Naive thymus-derived CD4-positive, alpha-beta T cell (primary cell): ENCODE measurements at regions of chr10 and their contacts with region 1.

Region 1: GRCh38 chr10:77710759-77711682 is 73.4 kb upstream of the KCNMA1 start:
- DNase-seq: peak; percentile 26 to 82 (median 55)
- ATAC-seq: peak; percentile 95
- H3K4me3 ChIP-seq: peak overlapping the region; percentile 30
- H3K4me3 Mint-ChIP-seq: peak overlapping the region; percentile 24 to 70 (median 54)
- H3K27ac ChIP-seq: no peak overlapping the region
- H3K27ac Mint-ChIP-seq: no peak overlapping the region
- H3K4me1 ChIP-seq: no peaks in the 10 kb centered on the region
- H3K4me1 Mint-ChIP-seq: peaks cover 3 to 7% (median 5%) of the 10 kb centered on the region in 7 donors
- H3K27me3 ChIP-seq: peaks cover 0 to 2% of the 10 kb centered on the region in 2 donors
- H3K27me3 Mint-ChIP-seq: peaks cover 6 to 52% (median 41%) of the 10 kb centered on the region in 5 donors

Region 2: GRCh38 chr10:77165445-77166208 is 545.4 kb before region 1 on chr10:
- CTCF ChIA-PET with region 1: no interaction called
- POLR2A ChIA-PET with region 1: no interaction called
- intact Hi-C with region 1: loop called (anchors 2 kb)
- DNase-seq: peak in 6 of 9 donors; percentile 22 to 34 (median 28)
- ATAC-seq: peak; percentile 60
- H3K4me3 ChIP-seq: no peak overlapping the region
- H3K4me3 Mint-ChIP-seq: peak overlapping the region in 7 of 10 donors; percentile 7 to 73 (median 62)
- H3K27ac ChIP-seq: no peak overlapping the region
- H3K27ac Mint-ChIP-seq: no peak overlapping the region
- H3K4me1 ChIP-seq: no peaks in the 10 kb centered on the region
- H3K4me1 Mint-ChIP-seq: peaks cover 0 to 5% (median 3%) of the 10 kb centered on the region in 7 donors
- H3K27me3 ChIP-seq: no peaks in the 10 kb centered on the region
- H3K27me3 Mint-ChIP-seq: peaks cover 24 to 44% (median 39%) of the 10 kb centered on the region in 5 donors

Region 3: GRCh38 chr10:77173615-77174461 is 537.2 kb before region 1 on chr10:
- CTCF ChIA-PET with region 1: interaction called, 3 read pairs
- POLR2A ChIA-PET with region 1: no interaction called
- intact Hi-C with region 1: loop called in 1 of 2 experiments (anchors 1 kb)
- DNase-seq: peak in 8 of 9 donors; percentile 19 to 50 (median 38)
- ATAC-seq: peak; percentile 68
- H3K4me3 ChIP-seq: no peak overlapping the region
- H3K4me3 Mint-ChIP-seq: no peak overlapping the region
- H3K27ac ChIP-seq: no peak overlapping the region
- H3K27ac Mint-ChIP-seq: no peak overlapping the region
- H3K4me1 ChIP-seq: no peaks in the 10 kb centered on the region
- H3K4me1 Mint-ChIP-seq: no peaks in the 10 kb centered on the region
- H3K27me3 ChIP-seq: no peaks in the 10 kb centered on the region
- H3K27me3 Mint-ChIP-seq: peaks cover 3 to 32% (median 12%) of the 10 kb centered on the region in 5 donors

Region 4: DNA sequence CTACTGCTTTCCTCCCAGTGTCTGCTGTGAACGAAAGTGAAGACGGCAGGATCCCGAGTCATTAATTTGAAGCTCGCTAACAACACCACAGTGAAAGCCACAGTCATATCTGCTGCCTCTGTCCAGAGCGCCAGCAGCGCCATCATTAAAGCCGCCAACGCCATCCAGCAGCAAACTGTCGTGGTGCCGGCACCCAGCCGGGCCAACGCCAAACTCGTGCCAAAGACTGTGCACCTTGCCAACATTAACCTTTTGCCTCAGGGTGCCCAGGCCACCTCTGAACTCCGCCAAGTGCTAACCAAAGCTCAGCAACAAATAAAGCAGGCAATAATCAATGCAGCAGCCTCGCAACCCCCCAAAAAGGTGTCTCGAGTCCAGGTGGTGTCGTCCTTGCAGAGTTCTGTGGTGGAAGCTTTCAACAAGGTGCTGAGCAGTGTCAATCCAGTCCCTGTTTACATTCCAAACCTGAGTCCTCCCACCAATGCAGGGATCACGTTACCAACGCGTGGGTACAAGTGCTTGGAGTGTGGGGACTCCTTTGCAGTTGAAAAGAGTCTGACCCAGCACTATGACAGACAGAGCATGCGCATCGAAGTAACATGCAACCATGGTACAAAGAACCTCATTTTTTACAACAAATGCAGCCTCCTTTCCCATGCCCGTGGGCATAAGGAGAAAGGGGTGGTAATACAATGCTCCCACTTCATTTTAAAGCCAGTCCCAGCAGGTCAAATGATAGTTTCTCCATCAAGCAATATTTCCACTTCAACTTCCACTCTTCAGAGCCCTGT is 21.4 kb after region 1 on chr10:
- CTCF ChIA-PET with region 1: no interaction called
- POLR2A ChIA-PET with region 1: no interaction called
- intact Hi-C with region 1: no loop called
- DNase-seq: no peak
- ATAC-seq: no peak
- H3K4me3 ChIP-seq: no peak overlapping the region
- H3K4me3 Mint-ChIP-seq: no peak overlapping the region
- H3K27ac ChIP-seq: no peak overlapping the region
- H3K27ac Mint-ChIP-seq: no peak overlapping the region
- H3K4me1 ChIP-seq: no peaks in the 10 kb centered on the region
- H3K4me1 Mint-ChIP-seq: no peaks in the 10 kb centered on the region
- H3K27me3 ChIP-seq: no peaks in the 10 kb centered on the region
- H3K27me3 Mint-ChIP-seq: peaks cover 4 to 17% (median 11%) of the 10 kb centered on the region in 5 donors

Region 5: GRCh38 chr10:77756319-77757232 is 45.6 kb after region 1 on chr10:
- CTCF ChIA-PET with region 1: no interaction called
- POLR2A ChIA-PET with region 1: no interaction called
- intact Hi-C with region 1: loop called in 1 of 2 experiments (anchors 5 kb)
- DNase-seq: no peak
- ATAC-seq: no peak
- H3K4me3 ChIP-seq: no peak overlapping the region
- H3K4me3 Mint-ChIP-seq: no peak overlapping the region
- H3K27ac ChIP-seq: no peak overlapping the region
- H3K27ac Mint-ChIP-seq: no peak overlapping the region
- H3K4me1 ChIP-seq: no peaks in the 10 kb centered on the region
- H3K4me1 Mint-ChIP-seq: no peaks in the 10 kb centered on the region
- H3K27me3 ChIP-seq: no peaks in the 10 kb centered on the region
- H3K27me3 Mint-ChIP-seq: peaks cover 10 to 34% (median 16%) of the 10 kb centered on the region in 5 donors